ENCODE measurements at regions of chr11 and their contacts with region 1.

Region 1: DNA sequence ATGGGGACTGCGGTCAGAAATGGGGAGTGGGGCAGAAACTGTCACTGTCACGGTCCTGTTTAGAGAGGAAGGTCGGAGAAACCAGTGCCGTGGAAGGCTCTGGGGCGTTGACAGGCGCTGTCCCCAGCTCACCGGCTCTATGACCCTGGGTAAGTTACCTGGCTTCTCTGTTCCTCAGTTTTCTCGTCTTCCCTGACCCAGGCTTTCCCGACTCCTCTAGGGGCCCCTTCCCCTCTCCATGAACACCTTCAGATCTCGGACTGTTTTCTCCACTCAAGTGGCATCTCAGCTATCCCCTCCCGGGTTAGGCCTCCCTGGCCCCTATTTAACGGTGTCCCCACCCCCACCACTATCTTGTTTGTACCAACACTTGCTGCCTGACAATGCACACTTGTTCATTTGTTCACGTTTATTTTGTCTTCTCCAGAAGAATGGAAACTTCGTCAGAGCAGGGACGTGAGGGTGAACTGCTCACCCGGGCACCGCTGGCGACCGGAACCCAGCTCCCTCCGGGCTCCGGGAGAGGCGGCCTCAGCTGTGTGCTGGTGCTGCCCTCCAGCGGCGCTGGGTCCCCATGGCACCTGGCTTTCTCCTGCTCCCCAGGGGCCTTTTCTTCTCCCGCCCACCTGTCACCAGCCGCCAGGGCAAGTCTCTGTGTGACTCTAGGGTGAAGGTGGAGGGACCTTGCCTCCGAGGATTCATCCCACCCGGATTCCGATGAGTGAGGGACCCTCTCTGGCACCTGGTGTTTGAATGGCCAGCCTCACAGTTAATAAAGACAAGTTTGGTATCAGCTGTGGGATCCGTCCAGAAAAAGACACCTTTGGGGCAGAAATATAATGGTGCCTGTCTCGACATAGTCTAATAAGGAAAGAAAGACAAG is 33.1 kb upstream of the SLC35C1 start:
- DNase-seq: peak; percentile 86
- ATAC-seq: peak; percentile 91
- H3K4me3 Mint-ChIP-seq: peak overlapping the region; percentile 80
- H3K27ac Mint-ChIP-seq: peak overlapping the region; percentile 44
- H3K4me1 Mint-ChIP-seq: peaks cover 14% of the 10 kb centered on the region
- H3K27me3 Mint-ChIP-seq: peaks cover 6% of the 10 kb centered on the region

Region 2: GRCh38 chr11:45339729-45340519 is 431.9 kb before region 1 on chr11:
- CTCF ChIA-PET with region 1: interaction called, 25 read pairs
- DNase-seq: peak; percentile 94
- ATAC-seq: peak; percentile 100
- H3K4me3 Mint-ChIP-seq: peak overlapping the region; percentile 51
- H3K27ac Mint-ChIP-seq: no peak overlapping the region
- H3K4me1 Mint-ChIP-seq: peaks cover 8% of the 10 kb centered on the region
- H3K27me3 Mint-ChIP-seq: peaks cover 33% of the 10 kb centered on the region

Region 3: GRCh38 chr11:45655347-45655756 is 116.5 kb before region 1 on chr11:
- CTCF ChIA-PET with region 1: interaction called, 15 read pairs
- DNase-seq: peak; percentile 66
- ATAC-seq: peak; percentile 59
- H3K4me3 Mint-ChIP-seq: no peak overlapping the region
- H3K27ac Mint-ChIP-seq: no peak overlapping the region
- H3K4me1 Mint-ChIP-seq: peaks cover 7% of the 10 kb centered on the region
- H3K27me3 Mint-ChIP-seq: peaks cover 35% of the 10 kb centered on the region

Region 4: DNA sequence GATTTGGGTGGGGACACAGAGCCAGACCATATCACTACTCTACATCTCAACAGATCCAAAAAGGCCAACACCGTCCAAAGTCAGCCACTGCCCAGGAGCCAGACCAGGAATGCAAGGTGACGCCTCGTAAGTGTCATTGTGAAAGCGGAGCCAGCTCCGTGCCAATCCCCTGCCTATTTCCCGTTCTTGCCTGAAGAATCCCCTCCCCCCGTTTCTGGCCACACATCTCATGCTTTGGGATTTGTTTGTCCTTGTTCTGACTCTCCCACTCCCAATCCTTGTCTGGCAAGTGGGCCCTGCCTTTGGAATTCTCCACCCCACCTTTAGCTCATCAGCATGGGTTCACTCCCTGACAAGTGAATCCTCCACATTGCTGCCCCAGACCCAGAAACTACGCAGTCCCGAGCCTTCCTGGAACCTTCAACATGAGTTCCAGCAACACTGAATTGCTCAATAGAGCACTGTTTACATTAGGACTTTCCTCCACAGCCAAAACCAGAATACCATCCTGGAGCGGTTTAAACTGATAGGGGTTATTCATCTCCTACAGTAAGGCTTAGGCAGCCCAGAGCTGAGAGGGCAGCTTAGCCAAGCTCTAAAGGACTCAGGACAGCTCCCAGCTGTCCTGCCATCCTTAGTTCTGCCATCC is 27.1 kb after region 1 on chr11:
- CTCF ChIA-PET with region 1: interaction called, 12 read pairs
- DNase-seq: no peak
- ATAC-seq: no peak
- H3K4me3 Mint-ChIP-seq: no peak overlapping the region
- H3K27ac Mint-ChIP-seq: no peak overlapping the region
- H3K4me1 Mint-ChIP-seq: peaks cover 4% of the 10 kb centered on the region
- H3K27me3 Mint-ChIP-seq: no peaks in the 10 kb centered on the region

Region 5: DNA sequence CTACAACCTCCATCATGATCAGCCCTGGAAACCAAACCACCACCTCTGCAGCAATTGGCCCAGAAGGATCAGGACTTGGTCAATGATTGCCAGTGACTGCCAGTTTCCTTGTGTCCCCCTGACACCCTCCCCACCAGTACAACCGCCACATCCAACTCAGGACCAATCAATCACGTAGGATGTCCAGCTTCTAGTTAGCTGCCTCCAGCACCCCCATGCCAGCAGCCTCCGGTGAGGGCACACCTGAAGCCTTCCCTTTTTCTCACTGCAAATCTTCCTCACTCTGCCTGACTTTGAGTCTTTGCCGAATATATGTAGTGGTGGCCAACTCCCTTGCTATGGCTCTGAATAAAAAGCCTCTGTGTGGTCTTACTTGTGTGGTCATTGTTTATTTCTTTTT is 53.5 kb after region 1 on chr11:
- CTCF ChIA-PET with region 1: no interaction called
- DNase-seq: no peak
- ATAC-seq: no peak
- H3K4me3 Mint-ChIP-seq: no peak overlapping the region
- H3K27ac Mint-ChIP-seq: no peak overlapping the region
- H3K4me1 Mint-ChIP-seq: no peaks in the 10 kb centered on the region
- H3K27me3 Mint-ChIP-seq: peaks cover 31% of the 10 kb centered on the region

Region 6: GRCh38 chr11:45881712-45882368 is 110.0 kb after region 1 on chr11:
- CTCF ChIA-PET with region 1: no interaction called
- DNase-seq: no peak
- ATAC-seq: no peak
- H3K4me3 Mint-ChIP-seq: no peak overlapping the region
- H3K27ac Mint-ChIP-seq: no peak overlapping the region
- H3K4me1 Mint-ChIP-seq: peaks cover 9% of the 10 kb centered on the region
- H3K27me3 Mint-ChIP-seq: no peaks in the 10 kb centered on the region

Region 7: DNA sequence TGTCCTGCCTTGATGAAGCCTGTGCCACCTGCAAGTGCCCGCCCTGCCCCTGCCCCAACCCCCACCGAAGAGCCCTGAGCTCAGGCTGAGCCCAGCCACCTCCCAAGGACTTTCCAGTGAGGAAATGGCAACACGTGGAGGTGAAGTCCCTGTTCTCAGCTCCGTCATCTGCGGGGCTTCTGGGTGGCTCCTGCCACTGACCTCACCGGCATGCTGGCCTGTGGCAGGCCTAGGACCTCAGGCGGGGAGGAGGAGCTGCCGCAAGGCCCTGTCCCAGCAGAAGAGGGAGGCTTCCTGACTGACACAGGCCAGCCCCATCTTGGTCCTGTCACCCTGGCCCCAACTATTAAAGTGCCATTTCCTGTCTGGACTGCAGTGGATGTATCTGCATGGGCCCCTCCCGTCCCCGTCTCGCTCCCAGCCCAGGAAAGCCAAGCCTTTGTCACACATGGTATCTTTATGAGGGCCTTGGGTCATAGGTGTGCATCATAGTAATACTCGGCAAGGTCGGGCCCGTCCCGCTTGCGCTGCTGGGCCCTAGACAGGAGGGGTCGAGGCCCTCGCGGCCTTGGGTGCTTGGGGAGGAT is 134.4 kb after region 1 on chr11:
- CTCF ChIA-PET with region 1: no interaction called
- DNase-seq: no peak
- ATAC-seq: no peak
- H3K4me3 Mint-ChIP-seq: no peak overlapping the region
- H3K27ac Mint-ChIP-seq: no peak overlapping the region
- H3K4me1 Mint-ChIP-seq: peaks cover 2% of the 10 kb centered on the region
- H3K27me3 Mint-ChIP-seq: peaks cover 5% of the 10 kb centered on the region

Region 8: DNA sequence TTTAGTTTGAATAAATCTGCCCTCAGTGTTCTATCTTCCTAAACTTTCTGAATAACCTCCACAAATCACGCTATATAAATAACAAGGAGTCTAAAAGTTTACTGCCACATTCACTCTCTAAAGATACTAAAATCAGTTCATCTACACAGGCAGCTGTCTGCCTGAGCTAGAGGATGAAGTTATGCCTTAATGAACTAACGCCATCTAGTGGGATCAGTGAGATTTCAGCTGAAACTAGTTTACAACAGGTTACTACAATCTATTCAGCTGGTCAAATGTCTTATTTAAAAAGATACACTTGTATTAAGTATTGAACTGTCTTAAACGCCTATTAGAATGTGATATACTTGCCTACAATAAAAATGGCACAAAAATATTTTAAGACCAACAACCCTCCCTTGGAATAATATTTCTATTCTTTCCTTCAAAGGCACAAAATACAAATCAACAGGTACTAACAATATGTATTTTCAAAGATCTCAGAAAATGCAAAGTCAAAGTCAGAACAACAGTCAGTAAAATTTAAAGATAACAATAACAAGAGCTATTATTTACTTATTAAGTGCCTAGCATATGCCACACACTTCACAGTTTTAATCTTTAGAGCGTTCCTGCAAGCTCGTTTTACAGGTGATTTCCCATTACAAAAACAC is 234.7 kb after region 1 on chr11:
- CTCF ChIA-PET with region 1: interaction called, 14 read pairs
- DNase-seq: no peak
- ATAC-seq: peak; percentile 90
- H3K4me3 Mint-ChIP-seq: no peak overlapping the region
- H3K27ac Mint-ChIP-seq: no peak overlapping the region
- H3K4me1 Mint-ChIP-seq: peaks cover 2% of the 10 kb centered on the region
- H3K27me3 Mint-ChIP-seq: no peaks in the 10 kb centered on the region